ENCODE measurements at regions of chr4 and their contacts with region 1.

Region 1: GRCh38 chr4:42519803-42520417 is 122.6 kb downstream of the SHISA3 start:
- DNase-seq: peak; percentile 27 to 39
- H3K4me3 ChIP-seq: no peak overlapping the region
- H3K27ac ChIP-seq: no peak overlapping the region
- H3K4me1 ChIP-seq: no peaks in the 10 kb centered on the region
- H3K27me3 ChIP-seq: no peaks in the 10 kb centered on the region
- CTCF ChIP-seq: peak in 5 of 6 experiments; percentile 28 to 73 (median 66)
- POLR2A ChIP-seq: no peak

Region 2: GRCh38 chr4:42282081-42282901 is 237.6 kb before region 1 on chr4:
- intact Hi-C with region 1: loop called (anchors 10 kb)
- DNase-seq: peak; percentile 37 to 47
- H3K4me3 ChIP-seq: no peak overlapping the region
- H3K27ac ChIP-seq: no peak overlapping the region
- H3K4me1 ChIP-seq: no peaks in the 10 kb centered on the region
- H3K27me3 ChIP-seq: no peaks in the 10 kb centered on the region
- CTCF ChIP-seq: peak; percentile 33 to 79 (median 61)
- POLR2A ChIP-seq: no peak

Region 3: DNA sequence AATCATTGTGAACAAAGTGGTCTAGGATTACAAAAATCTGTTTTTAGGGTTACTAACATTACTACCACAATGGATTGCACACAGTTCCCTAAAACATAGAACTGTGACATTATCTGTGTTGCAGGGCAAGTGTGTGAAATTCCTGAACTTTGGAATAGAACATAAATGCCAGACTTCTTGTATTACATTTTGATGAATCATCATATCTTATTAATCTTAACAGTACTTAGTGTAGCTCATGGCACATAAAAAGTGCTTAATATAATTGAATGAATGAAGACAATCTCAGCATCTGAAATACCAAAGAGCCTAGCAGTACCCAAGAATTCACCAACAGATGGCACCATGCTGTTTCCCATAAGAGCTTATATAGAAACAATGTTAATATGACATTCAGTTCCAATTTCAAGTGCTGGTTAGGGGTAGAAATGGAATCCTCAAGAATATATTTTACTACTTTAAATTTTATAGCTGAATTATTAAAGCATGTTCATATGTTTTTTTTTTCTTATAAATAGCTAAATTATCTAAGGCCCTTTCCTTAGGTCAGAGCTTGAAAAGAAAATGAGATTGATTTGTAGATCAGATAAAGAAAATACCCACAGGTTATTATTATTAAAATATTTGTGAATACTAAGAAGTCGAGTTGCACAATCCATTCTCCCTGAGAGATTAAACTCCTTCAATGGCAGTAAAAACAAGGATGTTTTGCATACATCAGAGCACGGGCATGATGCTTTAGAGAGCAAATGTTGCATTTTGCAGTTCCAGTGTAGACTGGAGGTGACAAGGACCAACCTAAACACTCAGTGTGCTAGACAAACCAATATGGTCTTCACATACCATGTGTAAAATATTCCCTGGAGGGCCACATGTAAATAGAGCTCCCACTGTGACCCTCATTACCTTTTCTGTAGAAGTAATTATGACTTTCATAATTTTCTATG is 148.3 kb before region 1 on chr4:
- intact Hi-C with region 1: loop called (anchors 5 kb)
- DNase-seq: peak in 1 of 2 donors; percentile 10
- H3K4me3 ChIP-seq: no peak overlapping the region
- H3K27ac ChIP-seq: no peak overlapping the region
- H3K4me1 ChIP-seq: no peaks in the 10 kb centered on the region
- H3K27me3 ChIP-seq: no peaks in the 10 kb centered on the region
- CTCF ChIP-seq: peak in 4 of 6 experiments; percentile 34 to 68 (median 62)
- POLR2A ChIP-seq: no peak

Region 4: GRCh38 chr4:42945874-42946273 is 426.0 kb after region 1 on chr4:
- intact Hi-C with region 1: no loop called
- DNase-seq: no peak
- H3K4me3 ChIP-seq: no peak overlapping the region
- H3K27ac ChIP-seq: no peak overlapping the region
- H3K4me1 ChIP-seq: no peaks in the 10 kb centered on the region
- H3K27me3 ChIP-seq: peaks cover 4% of the 10 kb centered on the region
- CTCF ChIP-seq: no peak
- POLR2A ChIP-seq: no peak